Activated T-helper 1 cell treated with anti-CD3 and anti-CD28 coated beads, Interleukin-12 subunit alpha, Interleukin-12 subunit beta, Interleukin-2, Interleukin-4 antibody, amounts not matched to agents 30 ng/mL and 10 ng/mL and 1 ng/mL, durations not matched to agents 14 hours and 24 hours and 36 hours (primary cell): ENCODE measurements at regions of chr17 and their contacts with region 1.

Region 1: GRCh38 chr17:75405365-75406221 is at the start of gene GRB2:
- DNase-seq: peak; percentile 100
- H3K4me3 Mint-ChIP-seq: peak within 1 kb of the TSS; percentile 97
- H3K27ac Mint-ChIP-seq: peak within 1 kb of the TSS; percentile 97
- H3K4me1 Mint-ChIP-seq: peaks cover 47% of the 10 kb centered on the region
- H3K27me3 Mint-ChIP-seq: no peaks in the 10 kb centered on the region
- total RNA-seq, gene GRB2: 172 and 183 TPM in 2 replicates

Region 2: DNA sequence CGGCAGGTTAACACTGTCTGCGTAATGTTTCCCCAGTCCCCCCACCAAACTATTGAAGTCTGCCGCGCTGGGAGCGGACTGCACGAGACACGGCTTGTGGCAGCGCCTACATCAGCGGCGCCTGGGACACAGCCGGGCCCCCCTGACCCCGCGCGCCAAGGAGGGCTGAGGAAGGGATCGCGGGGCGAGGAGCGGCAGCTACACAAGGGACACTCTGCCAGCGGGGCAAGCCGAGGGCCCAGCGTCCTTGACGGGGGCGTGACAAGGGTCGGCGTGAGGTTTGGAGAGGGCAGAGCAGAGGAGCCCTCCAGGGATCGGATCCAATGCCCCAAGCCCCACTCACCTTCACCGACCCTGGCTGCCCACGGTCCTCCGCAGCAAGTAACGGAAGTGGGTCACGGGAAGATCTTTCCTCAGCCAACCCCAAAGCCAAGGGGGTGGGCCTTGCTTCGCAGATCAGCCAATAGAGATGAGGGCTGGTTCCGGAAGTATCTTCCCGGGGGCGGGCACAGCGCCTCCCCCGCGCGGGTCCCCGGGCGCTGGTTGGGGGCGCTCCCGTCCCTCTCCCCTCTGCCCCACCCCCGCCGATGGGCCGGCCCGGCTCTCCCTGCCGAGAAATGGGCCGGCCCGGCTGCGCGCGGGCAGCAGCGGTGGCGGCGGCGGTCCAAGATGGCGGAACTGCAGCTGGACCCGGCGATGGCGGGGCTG is 358.9 kb before region 1 on chr17 and contains the starts of genes ATP5PD and KCTD2:
- intact Hi-C with region 1: loop called (anchors 2 kb)
- DNase-seq: peak; percentile 93
- H3K4me3 Mint-ChIP-seq: peak within 1 kb of the TSS; percentile 100
- H3K27ac Mint-ChIP-seq: peak within 1 kb of the TSS; percentile 98
- H3K4me1 Mint-ChIP-seq: peaks cover 35% of the 10 kb centered on the region
- H3K27me3 Mint-ChIP-seq: no peaks in the 10 kb centered on the region
- total RNA-seq, gene ATP5PD: 152 and 165 TPM in 2 replicates
- total RNA-seq, gene KCTD2: 21.2 and 22.6 TPM in 2 replicates

Region 3: DNA sequence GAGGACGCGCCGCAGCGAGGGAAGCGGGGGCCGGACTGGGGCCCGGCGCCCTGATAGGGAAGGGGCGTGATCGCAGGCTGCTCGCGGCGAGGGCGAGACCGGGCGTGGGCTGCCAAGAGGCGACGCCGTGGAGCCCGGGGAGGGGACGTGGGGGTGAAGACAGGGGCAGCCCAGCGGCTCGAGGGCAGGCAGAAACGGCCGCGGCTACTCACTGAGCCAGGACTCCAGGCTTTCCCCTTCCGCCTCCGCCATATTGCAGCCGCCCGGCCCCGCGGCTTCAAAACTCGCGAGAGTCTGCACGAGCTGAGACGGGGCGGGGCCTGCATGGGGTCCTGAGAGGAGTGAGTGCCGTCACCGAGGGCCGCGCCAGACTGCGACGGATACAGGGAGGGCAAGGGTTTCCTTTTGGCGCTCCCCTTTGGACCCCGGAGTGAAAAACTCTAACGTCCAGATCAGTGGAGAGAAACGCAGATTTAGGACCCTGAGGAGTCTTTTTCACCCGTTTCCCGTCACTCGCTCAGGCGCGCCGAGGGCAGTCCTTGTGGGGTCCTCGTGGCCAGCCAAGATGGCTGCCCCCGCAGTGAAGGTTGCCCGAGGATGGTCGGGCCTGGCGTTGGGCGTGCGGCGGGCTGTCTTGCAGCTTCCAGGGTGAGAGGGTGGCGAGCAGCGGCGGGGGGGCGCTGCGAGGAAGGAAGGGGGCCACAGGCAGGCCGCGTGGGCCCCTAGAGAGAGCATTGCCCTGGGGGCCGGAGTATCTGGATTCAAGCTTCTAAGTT is 144.1 kb before region 1 on chr17 and contains the starts of genes GGA3 and MRPS7:
- intact Hi-C with region 1: loop called (anchors 2 kb)
- DNase-seq: peak; percentile 94
- H3K4me3 Mint-ChIP-seq: peak within 1 kb of the TSS; percentile 96
- H3K27ac Mint-ChIP-seq: peak within 1 kb of the TSS; percentile 97
- H3K4me1 Mint-ChIP-seq: peaks cover 49% of the 10 kb centered on the region
- H3K27me3 Mint-ChIP-seq: no peaks in the 10 kb centered on the region
- total RNA-seq, gene GGA3: 93.4 and 94.3 TPM in 2 replicates
- total RNA-seq, gene MRPS7: 126 and 130 TPM in 2 replicates

Region 4: GRCh38 chr17:75319904-75320691 is 85.5 kb before region 1 on chr17:
- intact Hi-C with region 1: loop called (anchors 1 kb)
- DNase-seq: no peak
- H3K4me3 Mint-ChIP-seq: no peak overlapping the region
- H3K27ac Mint-ChIP-seq: no peak overlapping the region
- H3K4me1 Mint-ChIP-seq: peaks cover 16% of the 10 kb centered on the region
- H3K27me3 Mint-ChIP-seq: no peaks in the 10 kb centered on the region

Region 5: DNA sequence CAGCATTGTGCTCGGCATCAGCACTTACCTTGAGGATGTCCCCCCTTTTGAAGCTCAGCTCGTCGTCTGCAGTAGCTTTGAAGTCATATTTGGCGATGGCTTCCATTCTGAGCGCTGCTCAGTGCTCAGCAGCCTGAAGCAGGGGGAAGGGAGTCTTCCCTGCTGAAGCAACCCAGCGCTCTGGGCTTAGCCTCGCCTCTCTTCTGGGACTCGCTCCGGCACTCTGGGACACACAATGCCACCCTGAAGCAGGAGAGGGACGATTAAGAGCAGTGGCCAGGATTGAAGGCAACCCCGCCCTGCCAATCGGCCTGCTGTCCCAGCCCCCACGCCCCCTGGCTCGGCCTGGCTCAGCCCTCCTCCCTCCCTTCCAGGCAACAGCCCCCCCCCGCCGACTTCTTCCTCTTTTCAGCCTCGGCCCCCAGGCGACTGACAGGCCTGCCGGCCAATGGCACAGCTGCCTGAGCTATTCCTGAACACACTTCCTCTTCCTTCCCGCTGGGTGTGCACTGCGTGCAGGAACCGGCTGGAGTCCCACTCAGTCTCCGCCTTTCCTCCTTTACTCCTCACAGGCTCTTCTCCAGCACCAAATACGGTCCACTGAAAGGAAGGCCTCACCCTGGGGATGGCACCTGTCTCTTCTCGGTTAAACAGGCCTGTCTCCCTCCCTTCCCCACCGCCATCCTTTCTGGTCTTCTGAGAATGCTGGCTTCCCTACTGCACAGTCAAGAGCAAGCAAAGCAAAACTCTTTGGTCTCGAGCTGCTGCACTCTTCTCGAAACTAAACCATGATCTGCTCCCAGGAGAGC is 11.9 kb before region 1 on chr17:
- intact Hi-C with region 1: loop called (anchors 1 kb)
- DNase-seq: peak; percentile 76
- H3K4me3 Mint-ChIP-seq: peak overlapping the region; percentile 86
- H3K27ac Mint-ChIP-seq: peak overlapping the region; percentile 78
- H3K4me1 Mint-ChIP-seq: peaks cover 76% of the 10 kb centered on the region
- H3K27me3 Mint-ChIP-seq: no peaks in the 10 kb centered on the region

Region 6: DNA sequence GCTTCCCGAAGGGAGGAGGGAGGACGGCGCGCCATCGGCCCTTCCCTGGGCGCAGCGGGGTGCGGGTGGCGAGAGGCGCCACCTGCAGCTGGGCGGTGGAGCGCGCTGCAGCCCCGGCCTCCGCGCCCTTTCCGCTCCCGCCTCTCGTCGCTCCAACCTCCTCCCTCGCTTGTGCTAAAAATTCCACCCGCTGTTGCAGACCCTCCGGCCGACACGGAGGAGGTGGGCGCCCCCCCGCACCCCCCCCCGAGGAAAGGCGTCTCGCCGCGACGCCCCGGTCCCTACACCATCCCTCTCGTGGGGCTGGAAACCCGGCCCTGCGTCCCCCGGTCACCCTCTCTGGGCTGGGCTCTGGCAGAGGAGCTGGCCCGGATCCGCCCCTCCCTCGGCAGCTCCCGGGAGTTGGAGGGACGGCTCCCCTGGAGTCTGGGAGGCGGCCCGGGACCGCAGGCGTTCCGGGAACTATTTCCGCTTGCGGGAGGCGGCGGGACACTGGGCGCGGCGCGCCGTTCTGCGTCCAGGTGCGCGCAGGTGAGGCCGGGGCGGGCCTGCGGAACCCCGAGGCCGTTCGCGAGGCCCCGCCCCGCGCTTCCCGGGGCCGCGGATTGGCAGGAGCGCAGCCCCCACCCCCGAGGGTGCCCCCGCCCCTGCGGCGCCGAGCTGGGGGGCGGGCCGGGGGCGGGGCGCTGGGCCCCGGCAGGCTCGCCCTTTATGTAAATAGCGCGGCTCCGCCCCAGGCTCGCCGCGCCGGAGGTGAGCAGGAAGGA is 119.5 kb after region 1 on chr17 and contains the start of gene LLGL2:
- intact Hi-C with region 1: no loop called
- DNase-seq: peak; percentile 81
- H3K4me3 Mint-ChIP-seq: peak within 1 kb of the TSS; percentile 69
- H3K27ac Mint-ChIP-seq: no peak within 1 kb of the TSS
- H3K4me1 Mint-ChIP-seq: peaks cover 6% of the 10 kb centered on the region
- H3K27me3 Mint-ChIP-seq: peaks cover 10% of the 10 kb centered on the region
- total RNA-seq, gene LLGL2: 7.1 and 8.2 TPM in 2 replicates